Dendritic cell treated with granulocyte-macrophage colony-stimulating factor and Interleukin-4, amounts not matched to agents 40 ng/mL and 50 ng/mL, for 4 days (primary cell): ENCODE measurements at regions of chr11 and their contacts with region 1.

Region 1: GRCh38 chr11:67252831-67253239 is 13.4 kb upstream of the GRK2 start:
- H3K4me3 Mint-ChIP-seq: no peak overlapping the region
- H3K27ac Mint-ChIP-seq: peak overlapping the region; percentile 80
- H3K4me1 Mint-ChIP-seq: peaks cover 87% of the 10 kb centered on the region
- H3K27me3 Mint-ChIP-seq: no peaks in the 10 kb centered on the region

Region 2: DNA sequence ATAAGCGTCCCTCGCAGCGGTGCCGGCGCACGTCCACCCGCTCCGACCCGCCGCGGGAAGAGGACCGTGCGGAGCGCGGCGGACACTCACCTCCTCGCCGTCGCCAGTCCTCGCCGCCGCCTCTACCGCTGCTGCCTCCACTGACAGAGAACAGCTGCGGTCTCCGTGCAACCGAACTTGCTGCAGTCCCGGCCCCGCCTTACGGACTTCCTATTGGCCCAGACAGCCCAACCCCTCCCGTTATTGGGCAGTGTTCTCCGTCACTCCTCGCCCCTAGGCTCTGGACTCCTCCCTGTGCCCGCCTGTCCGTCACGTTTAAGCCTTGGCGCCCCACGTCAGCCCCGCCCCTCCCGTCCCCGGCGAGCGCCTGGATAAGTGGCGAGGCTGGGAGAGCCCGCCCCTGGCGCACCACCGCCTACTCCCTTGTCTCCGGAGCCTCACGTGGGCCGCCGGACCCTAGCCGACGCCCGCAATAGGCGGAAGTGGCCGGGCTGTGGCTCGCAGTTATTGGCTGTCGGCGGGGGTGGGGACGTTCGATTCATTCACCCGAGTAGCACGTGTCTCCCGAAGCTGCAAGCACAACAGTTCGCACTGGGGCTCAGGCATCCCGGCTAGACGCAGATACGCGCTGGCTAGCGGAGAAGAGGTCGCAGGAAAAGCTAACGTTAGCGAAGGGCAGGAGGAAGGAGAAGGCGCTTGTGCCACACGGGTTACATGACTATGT is 294.4 kb before region 1 on chr11 and contains the start of gene PC:
- intact Hi-C with region 1: no loop called
- H3K4me3 Mint-ChIP-seq: peak within 1 kb of the TSS; percentile 76
- H3K27ac Mint-ChIP-seq: peak within 1 kb of the TSS; percentile 80
- H3K4me1 Mint-ChIP-seq: peaks cover 53% of the 10 kb centered on the region
- H3K27me3 Mint-ChIP-seq: peaks cover 11% of the 10 kb centered on the region

Region 3: GRCh38 chr11:67240576-67241389 is 12.1 kb before region 1 on chr11:
- intact Hi-C with region 1: loop called (anchors 1 kb)
- H3K4me3 Mint-ChIP-seq: peak overlapping the region; percentile 87
- H3K27ac Mint-ChIP-seq: peak overlapping the region; percentile 100
- H3K4me1 Mint-ChIP-seq: peaks cover 65% of the 10 kb centered on the region
- H3K27me3 Mint-ChIP-seq: no peaks in the 10 kb centered on the region

Region 4: GRCh38 chr11:67317205-67317887 is 64.5 kb after region 1 on chr11:
- intact Hi-C with region 1: loop called (anchors 2 kb)
- H3K4me3 Mint-ChIP-seq: peak overlapping the region; percentile 92
- H3K27ac Mint-ChIP-seq: peak overlapping the region; percentile 96
- H3K4me1 Mint-ChIP-seq: peaks cover 27% of the 10 kb centered on the region
- H3K27me3 Mint-ChIP-seq: peaks cover 10% of the 10 kb centered on the region